GM12878 (cell line): ENCODE measurements at regions of chr4 and their contacts with region 1.

Region 1: GRCh38 chr4:1266881-1267763 is 18.2 kb upstream of the CTBP1 start:
- DNase-seq: no peak
- ATAC-seq: peak; percentile 84
- H3K4me3 ChIP-seq: peak overlapping the region; percentile 73; the same call in 1 of the 2 replicates
- H3K27ac ChIP-seq: peak overlapping the region; percentile 72
- H3K4me1 ChIP-seq: no peaks in the 10 kb centered on the region
- H3K27me3 ChIP-seq: no peaks in the 10 kb centered on the region
- CTCF ChIP-seq: no peak
- EP300 ChIP-seq: no peak
- POLR2A ChIP-seq: no peak
- RAD21 ChIP-seq: no peak

Region 2: DNA sequence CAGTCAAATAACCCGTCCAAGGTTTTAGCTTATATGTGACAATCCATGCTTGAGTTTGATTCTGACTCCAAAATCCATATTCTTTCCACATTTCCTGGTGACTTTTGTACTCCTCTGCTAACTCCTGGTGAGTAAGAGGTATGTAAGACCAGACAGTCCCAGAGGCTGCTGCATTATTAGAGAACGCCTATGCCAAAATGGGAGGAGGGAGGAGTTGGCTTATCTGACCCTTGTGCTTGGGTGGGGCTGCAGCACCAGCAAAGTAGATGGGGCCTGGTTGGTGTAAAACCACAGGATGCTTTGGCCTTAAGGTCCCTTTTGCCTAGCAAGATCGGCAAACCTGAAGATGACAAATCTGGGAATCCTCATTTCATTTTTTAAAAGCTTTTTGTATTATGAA is 144.6 kb before region 1 on chr4:
- CTCF ChIA-PET with region 1: interaction called, 113 read pairs
- POLR2A ChIA-PET with region 1: no interaction called
- RAD21 ChIA-PET with region 1: interaction called, 3 read pairs
- SMC1A ChIA-PET with region 1: no interaction called
- in situ Hi-C with region 1: no loop called
- intact Hi-C with region 1: no loop called
- DNase-seq: no peak
- ATAC-seq: no peak
- H3K4me3 ChIP-seq: no peak overlapping the region
- H3K27ac ChIP-seq: no peak overlapping the region
- H3K4me1 ChIP-seq: no peaks in the 10 kb centered on the region
- H3K27me3 ChIP-seq: no peaks in the 10 kb centered on the region; a peak in 1 of 4 replicates
- CTCF ChIP-seq: no peak
- EP300 ChIP-seq: no peak
- POLR2A ChIP-seq: no peak
- RAD21 ChIP-seq: no peak

Region 3: GRCh38 chr4:1137063-1137776 is 129.9 kb before region 1 on chr4:
- CTCF ChIA-PET with region 1: interaction called, 113 read pairs
- POLR2A ChIA-PET with region 1: interaction called, 3 read pairs
- RAD21 ChIA-PET with region 1: interaction called, 40 read pairs
- SMC1A ChIA-PET with region 1: interaction called, 65 read pairs
- in situ Hi-C with region 1: no loop called
- intact Hi-C with region 1: no loop called
- DNase-seq: peak; percentile 9
- ATAC-seq: no peak
- H3K4me3 ChIP-seq: no peak overlapping the region
- H3K27ac ChIP-seq: no peak overlapping the region
- H3K4me1 ChIP-seq: no peaks in the 10 kb centered on the region; the same call in none of the 2 replicates
- H3K27me3 ChIP-seq: no peaks in the 10 kb centered on the region
- CTCF ChIP-seq: no peak
- EP300 ChIP-seq: no peak
- POLR2A ChIP-seq: no peak
- RAD21 ChIP-seq: no peak

Region 4: DNA sequence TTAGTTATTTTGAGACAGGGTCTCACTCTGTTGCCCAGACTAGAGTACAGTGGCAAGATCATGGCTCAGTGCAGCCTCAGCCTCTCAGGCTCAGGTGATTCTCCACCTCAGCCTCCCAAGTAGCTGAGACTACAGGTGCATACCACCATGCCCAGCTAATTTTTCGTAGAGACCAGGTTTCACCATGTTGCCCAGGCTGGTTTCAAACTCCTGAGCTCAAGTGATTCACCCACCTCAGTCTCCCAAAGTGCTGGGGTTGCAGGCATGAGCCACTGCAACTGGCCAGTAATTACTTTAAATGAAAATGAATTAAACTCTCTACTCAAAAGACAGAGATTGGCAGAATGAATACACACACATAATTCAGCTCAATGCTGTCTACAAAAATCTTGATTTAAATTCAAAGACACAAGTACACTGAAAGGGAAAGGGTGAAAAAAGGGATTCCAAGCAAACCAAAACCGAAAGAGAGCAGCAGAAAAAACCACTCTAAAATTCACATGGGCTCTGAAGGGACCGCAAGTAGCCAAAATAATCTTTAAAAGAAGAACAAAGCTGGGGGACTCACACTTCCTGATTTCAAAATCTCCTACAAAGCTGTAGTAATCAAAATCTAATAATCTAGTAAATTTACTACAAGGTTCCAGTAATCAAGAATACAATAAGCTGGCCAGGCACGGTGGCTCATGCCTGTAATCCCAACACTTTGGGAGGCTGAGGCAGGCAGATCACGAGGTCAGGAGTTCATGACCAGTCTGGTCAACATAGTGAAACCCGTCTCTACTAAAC is 82.9 kb before region 1 on chr4:
- CTCF ChIA-PET with region 1: interaction called, 12 read pairs
- POLR2A ChIA-PET with region 1: no interaction called
- RAD21 ChIA-PET with region 1: interaction called, 4 read pairs
- SMC1A ChIA-PET with region 1: interaction called, 5 read pairs
- in situ Hi-C with region 1: no loop called
- intact Hi-C with region 1: no loop called
- DNase-seq: peak; percentile 64
- ATAC-seq: peak; percentile 82
- H3K4me3 ChIP-seq: peak overlapping the region; percentile 60
- H3K27ac ChIP-seq: peak overlapping the region; percentile 57
- H3K4me1 ChIP-seq: peaks cover 27% of the 10 kb centered on the region
- H3K27me3 ChIP-seq: no peaks in the 10 kb centered on the region
- CTCF ChIP-seq: no peak
- EP300 ChIP-seq: 0 out of 4 replicates have a peak, but pooled peaks of 1 of the 2 experiments have one; percentile 39
- POLR2A ChIP-seq: no peak
- RAD21 ChIP-seq: no peak

Region 5: DNA sequence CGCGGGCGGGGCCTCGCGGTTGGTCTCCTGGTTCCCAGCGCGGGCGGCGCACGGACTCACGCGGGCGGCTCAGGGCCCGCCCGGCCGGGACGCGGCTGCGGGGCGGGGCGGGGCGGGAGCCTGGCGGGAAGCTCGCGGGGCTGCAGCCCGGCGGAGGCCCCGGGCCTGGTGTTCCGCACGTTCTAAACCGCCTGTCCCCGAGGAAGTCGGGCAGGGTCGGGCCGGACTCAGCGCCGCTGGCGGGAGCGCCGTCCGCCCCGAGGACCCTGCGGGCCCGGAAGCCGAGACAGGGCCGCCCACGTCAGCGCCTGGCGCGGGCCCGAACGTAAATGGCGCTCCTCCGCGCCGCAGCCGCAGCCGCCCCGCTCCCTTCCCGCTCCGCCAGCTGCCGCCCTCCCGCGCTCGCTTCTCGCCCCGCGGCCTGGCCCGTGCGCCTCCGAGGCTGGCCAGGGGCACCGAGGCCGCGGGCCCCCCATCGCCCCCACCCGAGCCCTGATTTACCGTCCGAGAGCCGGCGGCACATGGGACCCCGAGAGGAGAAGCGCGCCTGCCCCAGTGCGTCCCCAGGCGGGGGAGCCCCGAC is 17.9 kb before region 1 on chr4:
- CTCF ChIA-PET with region 1: interaction called, 12 read pairs
- POLR2A ChIA-PET with region 1: interaction called, 6 read pairs
- RAD21 ChIA-PET with region 1: interaction called, 9 read pairs
- SMC1A ChIA-PET with region 1: interaction called, 12 read pairs
- in situ Hi-C with region 1: no loop called
- intact Hi-C with region 1: loop called (anchors 1 kb)
- DNase-seq: no peak
- ATAC-seq: peak; percentile 57
- H3K4me3 ChIP-seq: peak overlapping the region; percentile 83
- H3K27ac ChIP-seq: peak overlapping the region; percentile 92
- H3K4me1 ChIP-seq: peaks cover 24% of the 10 kb centered on the region
- H3K27me3 ChIP-seq: no peaks in the 10 kb centered on the region
- CTCF ChIP-seq: no peak
- EP300 ChIP-seq: no peak
- POLR2A ChIP-seq: no peak
- RAD21 ChIP-seq: no peak

Region 6: GRCh38 chr4:1346781-1347409 is 79.8 kb after region 1 on chr4 and contains the start of gene UVSSA:
- CTCF ChIA-PET with region 1: interaction called, 27 read pairs
- POLR2A ChIA-PET with region 1: no interaction called
- RAD21 ChIA-PET with region 1: interaction called, 13 read pairs
- SMC1A ChIA-PET with region 1: interaction called, 4 read pairs
- in situ Hi-C with region 1: no loop called
- intact Hi-C with region 1: loop called (anchors 5 kb)
- DNase-seq: peak; percentile 97
- ATAC-seq: peak; percentile 94
- H3K4me3 ChIP-seq: peak within 1 kb of the TSS; percentile 81
- H3K27ac ChIP-seq: peak within 1 kb of the TSS; percentile 88
- H3K4me1 ChIP-seq: peaks cover 10% of the 10 kb centered on the region
- H3K27me3 ChIP-seq: no peaks in the 10 kb centered on the region
- CTCF ChIP-seq: no peak
- EP300 ChIP-seq: no peak
- POLR2A ChIP-seq: no peak; the same call in 1 of the 2 replicates
- RAD21 ChIP-seq: no peak
- polyA plus RNA-seq, gene UVSSA: 0.34 to 0.82 TPM